ENCODE measurements at regions of chr11 and their contacts with region 1.

Region 1: DNA sequence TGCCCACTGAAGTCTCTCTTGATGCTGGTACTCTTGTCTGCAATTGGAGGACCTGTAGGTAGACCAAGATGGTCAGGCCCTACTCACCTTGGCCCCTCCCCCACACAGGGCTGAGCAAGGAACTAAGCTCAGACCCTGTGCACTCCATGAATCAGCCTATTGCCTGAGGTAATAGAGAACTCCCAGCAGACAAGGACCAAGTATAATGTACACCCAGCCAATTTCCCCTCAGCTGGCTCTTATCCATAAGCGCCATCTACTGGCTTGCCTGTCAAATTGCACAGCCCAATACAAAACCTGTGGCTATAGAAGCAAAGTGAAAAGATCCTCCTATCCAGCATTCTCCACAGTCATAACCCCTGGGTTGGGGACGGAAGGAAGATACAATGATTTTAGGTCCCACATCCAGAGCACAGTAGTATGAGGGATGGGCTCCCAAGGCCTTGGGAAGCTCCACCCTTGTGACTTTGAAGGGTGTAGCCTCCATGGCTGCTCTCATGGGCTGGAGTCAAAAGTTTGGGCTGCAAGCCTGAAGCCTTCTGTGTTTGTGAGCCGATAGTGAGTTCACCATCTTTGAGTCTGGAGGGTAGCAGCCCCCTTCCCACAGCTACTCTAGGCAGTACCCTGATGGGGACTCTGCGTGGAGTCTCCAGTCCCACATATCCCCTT is 56.0 kb downstream of the GLYATL2 start:
- DNase-seq: peak; percentile 59
- H3K4me3 Mint-ChIP-seq: no peak overlapping the region
- H3K27ac Mint-ChIP-seq: no peak overlapping the region
- H3K4me1 Mint-ChIP-seq: no peaks in the 10 kb centered on the region
- H3K27me3 Mint-ChIP-seq: no peaks in the 10 kb centered on the region
- CTCF ChIP-seq: peak; percentile 70

Region 2: DNA sequence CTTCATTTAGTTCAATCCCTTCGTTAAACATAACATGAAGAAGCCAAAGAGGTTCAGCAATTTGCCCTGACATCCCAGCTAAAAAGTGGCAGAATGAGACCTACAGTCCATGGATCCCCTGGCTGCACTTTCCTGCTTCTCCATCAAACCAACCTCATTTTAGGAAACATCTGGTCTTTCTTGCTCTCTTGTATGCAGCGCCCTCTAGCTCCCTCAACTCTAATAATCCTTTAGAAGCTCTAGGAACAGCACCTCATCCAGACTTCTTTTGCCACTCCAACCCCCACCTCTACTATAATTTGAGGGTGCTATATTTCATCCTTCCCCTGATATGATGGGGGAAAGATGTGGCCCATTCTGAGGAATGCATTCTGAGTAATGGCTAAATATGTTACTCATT is 158.6 kb before region 1 on chr11:
- CTCF ChIA-PET with region 1: interaction called, 5 read pairs
- intact Hi-C with region 1: loop called (anchors 1 kb)
- DNase-seq: peak; percentile 27
- H3K4me3 Mint-ChIP-seq: no peak overlapping the region
- H3K27ac Mint-ChIP-seq: no peak overlapping the region
- H3K4me1 Mint-ChIP-seq: peaks cover 24% of the 10 kb centered on the region
- H3K27me3 Mint-ChIP-seq: no peaks in the 10 kb centered on the region
- CTCF ChIP-seq: peak; percentile 35